Gastrocnemius medialis (tissue), 4 donors: ENCODE measurements at regions of chr3 and their contacts with region 1.

Region 1: DNA sequence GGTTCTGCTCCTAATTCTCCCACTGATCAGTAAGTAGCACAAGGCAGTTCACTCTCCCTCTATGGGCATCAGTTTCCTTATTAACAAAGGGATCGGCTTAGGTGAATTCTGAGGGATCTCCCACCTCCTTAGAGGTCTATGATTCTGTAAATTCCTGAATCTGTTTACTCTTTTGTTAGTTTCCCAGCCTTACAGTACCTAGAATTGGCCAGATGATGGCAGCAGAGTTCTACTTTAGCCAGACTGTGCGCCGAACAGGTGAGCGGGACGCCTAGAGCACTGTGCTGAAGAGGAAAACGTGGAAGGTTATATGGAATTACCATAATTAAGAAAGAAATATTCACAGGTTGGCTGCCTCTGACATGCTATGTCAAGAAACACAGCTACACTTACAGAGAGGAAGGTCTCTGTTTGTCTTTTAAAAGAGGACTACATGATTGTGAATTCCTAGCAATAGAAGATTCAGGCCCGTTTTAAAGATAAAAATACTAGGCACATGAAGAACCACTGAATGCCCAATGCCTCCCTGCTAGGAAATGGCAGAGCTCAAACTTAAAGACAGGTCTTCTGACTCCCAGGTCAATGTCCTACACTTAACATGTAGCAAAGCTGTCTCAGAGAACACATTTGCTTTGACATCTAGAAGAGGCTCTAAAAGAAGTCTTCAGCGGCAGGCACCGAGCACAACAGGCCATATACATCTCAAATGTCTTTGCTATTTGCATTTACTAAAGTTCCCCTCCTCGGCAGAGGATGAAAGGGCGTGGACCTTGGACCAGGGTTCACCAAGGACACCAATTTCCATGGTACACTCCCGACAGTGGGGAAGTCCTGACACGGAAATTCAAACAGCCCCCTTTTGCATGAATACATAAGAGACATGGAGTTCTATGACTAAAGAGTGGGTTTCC is 259.9 kb downstream of the FGF12 start:
- DNase-seq: peak; percentile 11 to 19
- ATAC-seq: peak; percentile 62 to 74
- H3K4me3 ChIP-seq: no peak overlapping the region
- H3K27ac ChIP-seq: no peak overlapping the region
- H3K4me1 ChIP-seq: no peaks in the 10 kb centered on the region
- H3K27me3 ChIP-seq: no peaks in the 10 kb centered on the region
- CTCF ChIP-seq: peak; percentile 61 to 90 (median 73)
- POLR2A ChIP-seq: no peak

Region 2: DNA sequence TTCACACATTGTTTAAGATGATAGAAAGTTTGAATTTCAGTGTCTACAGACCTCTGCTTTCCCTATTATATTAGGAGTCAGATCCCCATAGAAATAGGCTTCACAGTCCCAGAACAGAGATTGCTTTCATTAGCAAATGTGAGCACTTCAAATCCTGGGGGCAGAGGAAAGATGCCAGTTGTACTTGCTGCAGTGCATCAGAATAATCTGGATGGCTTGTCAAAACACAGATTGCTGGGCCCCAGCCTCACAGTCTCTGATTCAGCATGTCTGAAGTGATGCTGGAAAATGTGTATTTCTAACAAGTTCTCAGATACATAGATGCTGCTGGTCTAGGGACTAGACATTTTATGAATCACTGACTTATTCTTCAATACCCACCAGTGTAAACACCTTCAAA is 115.3 kb before region 1 on chr3:
- in situ Hi-C with region 1: no loop called
- intact Hi-C with region 1: no loop called
- DNase-seq: no peak
- ATAC-seq: no peak
- H3K4me3 ChIP-seq: no peak overlapping the region
- H3K27ac ChIP-seq: no peak overlapping the region
- H3K4me1 ChIP-seq: no peaks in the 10 kb centered on the region
- H3K27me3 ChIP-seq: no peaks in the 10 kb centered on the region
- CTCF ChIP-seq: no peak
- POLR2A ChIP-seq: no peak

Region 3: GRCh38 chr3:192795021-192795420 is 327.5 kb after region 1 on chr3:
- in situ Hi-C with region 1: loop called in 1 of 4 experiments (anchors 10 kb)
- intact Hi-C with region 1: loop called (anchors 5 kb)
- DNase-seq: no peak
- ATAC-seq: no peak
- H3K4me3 ChIP-seq: no peak overlapping the region
- H3K27ac ChIP-seq: no peak overlapping the region
- H3K4me1 ChIP-seq: no peaks in the 10 kb centered on the region
- H3K27me3 ChIP-seq: no peaks in the 10 kb centered on the region
- CTCF ChIP-seq: no peak
- POLR2A ChIP-seq: no peak

Region 4: DNA sequence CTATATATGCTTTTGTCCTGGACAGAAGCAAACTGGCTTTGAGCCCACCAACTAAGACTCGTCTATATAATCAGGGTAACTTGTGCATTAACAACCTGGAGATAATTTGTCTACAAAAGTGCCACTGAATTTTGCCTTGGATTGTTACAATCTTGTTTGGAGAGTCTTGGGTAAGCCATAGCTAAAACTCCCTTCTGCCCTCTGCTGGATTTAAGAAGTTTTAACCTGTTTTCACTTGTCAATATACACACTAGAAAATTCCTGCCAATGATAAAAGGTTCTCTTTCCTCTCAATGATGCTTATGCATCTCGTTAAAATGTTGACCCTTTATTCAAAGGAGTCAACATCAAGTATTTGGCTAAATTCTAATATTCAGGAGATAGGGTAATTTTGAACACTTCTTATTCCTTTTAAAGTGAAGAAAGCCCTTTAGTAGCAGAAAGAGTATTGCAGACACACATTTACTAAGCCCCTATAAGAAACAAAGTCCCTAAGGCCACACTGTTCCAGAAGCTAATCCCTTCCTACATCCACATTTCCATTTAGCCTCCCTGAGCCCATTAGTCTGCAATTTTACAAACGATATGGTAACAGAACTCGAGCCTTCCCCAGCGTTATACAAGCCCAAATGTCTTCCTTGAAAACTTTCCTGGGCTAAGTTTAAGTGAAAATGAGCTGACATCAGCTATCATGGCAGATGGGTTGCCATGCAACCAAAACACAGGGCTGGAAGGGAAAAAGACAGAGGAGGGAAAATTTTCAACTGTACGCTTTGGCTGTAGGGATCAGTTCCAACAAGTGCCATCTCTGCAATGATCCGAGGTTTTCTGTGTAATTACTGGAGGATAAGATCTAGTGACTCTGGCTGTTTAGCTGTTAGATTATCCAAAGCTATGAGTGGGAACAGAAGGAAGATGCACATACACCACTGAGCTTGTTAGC is 335.7 kb after region 1 on chr3:
- in situ Hi-C with region 1: loop called in 1 of 4 experiments (anchors 10 kb)
- intact Hi-C with region 1: loop called (anchors 5 kb)
- DNase-seq: no peak
- ATAC-seq: no peak
- H3K4me3 ChIP-seq: no peak overlapping the region
- H3K27ac ChIP-seq: no peak overlapping the region
- H3K4me1 ChIP-seq: peaks cover 0 to 3% of the 10 kb centered on the region in 2 donors
- H3K27me3 ChIP-seq: no peaks in the 10 kb centered on the region
- CTCF ChIP-seq: peak in 4 of 5 experiments; percentile 21 to 44 (median 36)
- POLR2A ChIP-seq: no peak